GM12878 (cell line): ENCODE measurements at regions of chr3 and their contacts with region 1.

Region 1: GRCh38 chr3:126982471-126983175 is at the start of gene PLXNA1:
- DNase-seq: peak; percentile 44
- ATAC-seq: peak; percentile 83
- H3K4me3 ChIP-seq: peak within 1 kb of the TSS; percentile 71
- H3K27ac ChIP-seq: peak within 1 kb of the TSS; percentile 67
- H3K4me1 ChIP-seq: peaks cover 9% of the 10 kb centered on the region
- H3K27me3 ChIP-seq: no peaks in the 10 kb centered on the region
- CTCF ChIP-seq: peak; percentile 94 to 96 (median 96)
- EP300 ChIP-seq: no peak
- POLR2A ChIP-seq: peak; percentile 69
- RAD21 ChIP-seq: peak; percentile 57
- polyA plus RNA-seq, gene PLXNA1: 0.03 to 0.15 TPM

Region 2: GRCh38 chr3:126442094-126442855 is 540.3 kb before region 1 on chr3:
- CTCF ChIA-PET with region 1: no interaction called
- POLR2A ChIA-PET with region 1: no interaction called
- RAD21 ChIA-PET with region 1: no interaction called
- SMC1A ChIA-PET with region 1: no interaction called
- in situ Hi-C with region 1: no loop called
- intact Hi-C with region 1: no loop called
- DNase-seq: no peak
- ATAC-seq: no peak
- H3K4me3 ChIP-seq: no peak overlapping the region
- H3K27ac ChIP-seq: no peak overlapping the region
- H3K4me1 ChIP-seq: no peaks in the 10 kb centered on the region
- H3K27me3 ChIP-seq: no peaks in the 10 kb centered on the region
- CTCF ChIP-seq: no peak
- EP300 ChIP-seq: no peak
- POLR2A ChIP-seq: no peak
- RAD21 ChIP-seq: no peak

Region 3: DNA sequence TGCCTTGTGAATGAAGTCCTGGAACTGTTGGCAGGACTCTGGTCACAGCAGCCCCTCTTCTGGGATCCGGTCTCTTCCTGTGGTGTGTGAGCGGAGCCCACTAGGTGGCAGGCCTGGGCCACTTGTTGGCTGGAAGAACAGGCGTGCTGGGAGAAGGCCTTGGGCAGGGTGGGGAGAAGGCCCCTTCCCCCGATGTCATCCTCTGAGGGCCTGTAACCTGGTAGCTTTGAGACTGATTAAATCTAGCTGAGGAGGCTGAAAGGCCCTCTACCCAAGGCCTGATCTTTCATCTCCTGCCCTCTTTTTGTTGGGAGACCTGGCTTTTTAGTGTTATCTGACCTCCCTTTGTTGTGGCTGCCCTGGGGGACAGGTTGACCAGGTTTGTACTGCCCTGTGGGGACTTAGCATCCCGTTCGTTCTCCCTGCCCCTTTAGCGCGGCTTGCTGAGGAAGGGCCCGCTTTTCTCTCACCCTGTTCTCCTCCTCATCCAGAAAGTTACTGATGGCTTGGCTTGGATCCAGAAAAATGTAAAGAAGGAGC is 230.2 kb before region 1 on chr3:
- CTCF ChIA-PET with region 1: interaction called, 45 read pairs
- POLR2A ChIA-PET with region 1: interaction called, 3 read pairs
- RAD21 ChIA-PET with region 1: interaction called, 36 read pairs
- SMC1A ChIA-PET with region 1: interaction called, 6 read pairs
- in situ Hi-C with region 1: loop called (anchors 5 kb)
- intact Hi-C with region 1: loop called (anchors 1 kb)
- DNase-seq: peak; percentile 30
- ATAC-seq: peak; percentile 100
- H3K4me3 ChIP-seq: no peak overlapping the region
- H3K27ac ChIP-seq: no peak overlapping the region
- H3K4me1 ChIP-seq: no peaks in the 10 kb centered on the region
- H3K27me3 ChIP-seq: no peaks in the 10 kb centered on the region
- CTCF ChIP-seq: peak; percentile 93 to 95 (median 95)
- EP300 ChIP-seq: no peak
- POLR2A ChIP-seq: no peak
- RAD21 ChIP-seq: peak; percentile 99

Region 4: GRCh38 chr3:126850370-126851085 is 132.1 kb before region 1 on chr3:
- CTCF ChIA-PET with region 1: no interaction called
- POLR2A ChIA-PET with region 1: no interaction called
- RAD21 ChIA-PET with region 1: no interaction called
- SMC1A ChIA-PET with region 1: no interaction called
- in situ Hi-C with region 1: no loop called
- intact Hi-C with region 1: no loop called
- DNase-seq: no peak
- ATAC-seq: no peak
- H3K4me3 ChIP-seq: no peak overlapping the region
- H3K27ac ChIP-seq: no peak overlapping the region
- H3K4me1 ChIP-seq: no peaks in the 10 kb centered on the region
- H3K27me3 ChIP-seq: no peaks in the 10 kb centered on the region
- CTCF ChIP-seq: no peak
- EP300 ChIP-seq: no peak
- POLR2A ChIP-seq: no peak
- RAD21 ChIP-seq: no peak

Region 5: DNA sequence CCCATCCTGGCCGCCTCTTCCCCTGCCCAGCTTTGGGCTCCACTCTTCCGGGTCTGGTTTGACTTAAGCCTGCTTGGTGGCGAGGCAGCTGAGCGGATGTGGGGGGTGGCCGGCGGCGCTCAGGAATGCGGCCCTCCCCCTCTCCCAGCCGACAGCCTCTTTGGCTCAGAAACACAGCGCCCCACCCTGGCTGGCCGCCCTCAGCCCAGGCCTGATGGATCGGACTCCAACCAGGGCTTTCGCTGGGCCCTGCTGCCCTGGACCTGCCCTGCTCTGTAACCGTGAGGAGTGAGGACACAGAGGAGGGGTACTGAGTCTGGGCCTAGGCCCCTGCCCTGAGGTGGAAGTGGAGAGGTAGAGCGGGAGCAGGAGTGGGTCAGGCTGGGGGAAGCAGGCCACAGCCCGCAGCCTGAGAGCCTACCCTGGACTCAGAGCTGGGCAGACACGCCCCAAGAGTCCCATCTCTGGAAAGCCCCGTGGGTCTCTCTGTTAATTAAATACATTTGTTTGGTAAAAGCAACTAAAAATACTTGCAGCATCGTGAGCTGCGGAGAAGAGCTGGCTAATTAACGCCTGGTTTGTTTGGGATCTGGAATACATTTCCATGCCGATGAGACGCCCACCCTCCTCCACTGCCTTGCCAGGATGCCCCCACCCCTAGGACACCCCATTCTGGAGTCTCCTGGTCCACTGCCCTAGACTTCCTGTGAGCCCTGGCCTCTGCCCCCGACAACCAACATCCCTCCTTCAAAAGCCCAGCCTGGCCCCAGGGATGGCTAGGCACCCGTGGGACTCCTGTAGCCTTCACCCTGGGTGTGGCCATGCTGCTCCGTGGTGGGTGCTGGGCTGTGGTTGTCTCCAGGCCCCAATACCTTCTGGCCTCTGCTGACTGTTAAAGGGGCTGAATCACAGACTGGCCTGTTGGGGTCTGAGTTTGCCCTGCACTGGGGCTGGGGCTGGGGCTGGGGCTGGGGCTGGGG is 19.9 kb after region 1 on chr3:
- CTCF ChIA-PET with region 1: interaction called, 7 read pairs
- POLR2A ChIA-PET with region 1: no interaction called
- RAD21 ChIA-PET with region 1: no interaction called
- SMC1A ChIA-PET with region 1: interaction called, 3 read pairs
- in situ Hi-C with region 1: no loop called
- intact Hi-C with region 1: loop called (anchors 1 kb)
- DNase-seq: no peak
- ATAC-seq: peak; percentile 79
- H3K4me3 ChIP-seq: no peak overlapping the region
- H3K27ac ChIP-seq: peak overlapping the region; percentile 61; the same call in 1 of the 2 replicates
- H3K4me1 ChIP-seq: peaks cover 7% of the 10 kb centered on the region
- H3K27me3 ChIP-seq: no peaks in the 10 kb centered on the region
- CTCF ChIP-seq: peak in 2 of 3 experiments; percentile 21 to 25; a peak in 2 of 6 replicates
- EP300 ChIP-seq: no peak
- POLR2A ChIP-seq: peak; percentile 51; the same call in 1 of the 2 replicates
- RAD21 ChIP-seq: no peak

Region 6: GRCh38 chr3:127455541-127456450 is 473.2 kb after region 1 on chr3:
- CTCF ChIA-PET with region 1: interaction called, 5 read pairs
- POLR2A ChIA-PET with region 1: no interaction called
- RAD21 ChIA-PET with region 1: interaction called, 3 read pairs
- SMC1A ChIA-PET with region 1: no interaction called
- in situ Hi-C with region 1: no loop called
- intact Hi-C with region 1: loop called (anchors 10 kb)
- DNase-seq: no peak
- ATAC-seq: peak; percentile 99
- H3K4me3 ChIP-seq: no peak overlapping the region
- H3K27ac ChIP-seq: no peak overlapping the region
- H3K4me1 ChIP-seq: no peaks in the 10 kb centered on the region
- H3K27me3 ChIP-seq: peaks cover 12 to 16% of the 10 kb centered on the region in 2 experiments
- CTCF ChIP-seq: peak; percentile 62 to 81 (median 80); a peak in 5 of 6 replicates
- EP300 ChIP-seq: no peak
- POLR2A ChIP-seq: no peak
- RAD21 ChIP-seq: peak; percentile 89